HEK293T (cell line): ENCODE measurements at regions of chrX and their contacts with region 1.

Region 1: DNA sequence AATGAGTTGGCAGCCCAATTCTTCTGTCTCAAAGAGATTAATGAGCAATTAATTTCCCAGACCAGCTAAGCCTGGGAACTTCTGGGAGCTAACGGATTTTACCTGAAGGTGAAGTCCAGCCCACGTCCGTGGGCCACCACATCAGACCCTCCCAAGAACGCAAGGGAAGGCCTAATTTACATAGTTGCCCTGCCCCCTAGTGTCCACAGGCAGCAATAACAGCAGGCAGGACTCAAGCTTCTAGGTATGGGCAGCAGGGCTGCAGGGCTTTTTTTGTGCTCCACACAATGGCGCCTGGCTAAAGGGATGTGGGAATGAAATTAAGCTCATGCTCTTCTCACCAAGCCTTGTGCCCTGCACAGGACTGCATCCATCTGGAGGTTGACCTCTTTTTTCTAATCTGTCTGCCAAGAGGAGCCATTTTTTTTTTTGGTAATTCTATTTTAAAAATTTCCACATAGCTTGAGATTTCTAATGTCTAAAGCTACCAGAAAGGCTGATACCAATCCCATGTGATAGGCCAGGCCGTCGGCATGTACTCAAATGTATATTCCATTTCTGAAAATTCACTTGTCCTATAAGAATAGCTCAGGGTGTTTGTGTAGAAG is 111.9 kb upstream of the TMEM164 start:
- DNase-seq: peak; percentile 87

Region 2: GRCh38 chrX:109475174-109475891 is 415.7 kb before region 1 on chrX:
- CTCF ChIA-PET with region 1: interaction called, 10 read pairs
- POLR2A ChIA-PET with region 1: no interaction called
- DNase-seq: peak; percentile 79

Region 3: GRCh38 chrX:109501176-109501575 is 389.8 kb before region 1 on chrX:
- CTCF ChIA-PET with region 1: no interaction called
- POLR2A ChIA-PET with region 1: no interaction called
- DNase-seq: no peak

Region 4: GRCh38 chrX:109635176-109635575 is 255.8 kb before region 1 on chrX:
- CTCF ChIA-PET with region 1: interaction called, 11 read pairs
- POLR2A ChIA-PET with region 1: interaction called, 3 read pairs
- DNase-seq: peak; percentile 66

Region 5: GRCh38 chrX:109742722-109743121 is 148.3 kb before region 1 on chrX:
- CTCF ChIA-PET with region 1: no interaction called
- POLR2A ChIA-PET with region 1: no interaction called
- DNase-seq: no peak

Region 6: DNA sequence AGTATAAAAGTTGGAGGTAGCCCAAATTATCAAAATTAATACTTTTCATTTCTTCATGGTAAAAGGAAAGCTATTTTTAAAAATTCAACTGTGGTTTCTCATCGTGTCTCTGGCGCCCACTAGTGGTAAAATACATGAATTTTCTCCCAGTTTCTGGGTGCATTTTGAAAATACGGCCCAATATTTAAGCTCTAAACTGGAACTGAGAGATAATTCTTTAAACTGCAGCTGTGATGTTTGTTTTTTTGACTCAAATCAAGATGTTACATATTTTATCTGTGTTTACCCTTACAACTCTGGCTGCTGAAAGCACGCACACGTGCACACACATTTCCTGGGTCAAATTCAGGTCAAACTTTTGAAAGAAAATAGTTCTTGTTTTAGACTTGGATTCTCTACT is 34.0 kb before region 1 on chrX:
- CTCF ChIA-PET with region 1: interaction called, 16 read pairs
- POLR2A ChIA-PET with region 1: no interaction called
- DNase-seq: peak; percentile 40

Region 7: DNA sequence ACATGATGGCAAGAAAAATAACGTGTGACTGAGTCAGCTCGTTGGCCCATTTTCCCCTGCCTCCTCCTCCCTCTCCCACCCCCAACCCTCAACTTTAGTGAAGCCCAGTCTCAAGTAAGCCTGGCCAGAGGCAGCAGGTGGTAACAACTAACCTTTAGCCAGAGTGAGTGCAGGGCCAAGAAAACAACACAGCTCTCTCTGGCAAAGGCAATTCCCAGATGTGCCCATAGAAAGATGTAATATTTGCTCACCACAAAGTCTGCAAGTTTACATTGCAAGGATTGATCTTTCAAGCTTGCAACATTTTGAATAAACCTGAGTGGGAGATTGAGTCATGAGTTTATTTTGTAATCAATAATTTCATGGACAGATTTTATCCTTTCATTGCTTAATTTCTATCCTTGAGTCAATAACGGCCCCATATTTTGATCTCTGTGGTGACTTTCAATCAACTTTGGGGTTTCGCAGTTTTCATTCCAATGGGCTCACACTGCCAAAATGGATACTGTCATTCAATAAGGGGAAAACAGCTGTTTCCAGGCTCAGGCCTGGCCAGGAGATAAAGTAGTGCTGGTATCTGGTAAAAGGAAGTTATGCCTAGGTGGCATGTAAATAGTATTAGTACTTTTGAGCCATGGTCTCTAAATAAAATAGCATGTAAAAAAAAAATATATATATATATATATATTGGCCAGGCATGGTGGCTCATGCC is 18.8 kb before region 1 on chrX:
- CTCF ChIA-PET with region 1: interaction called, 17 read pairs
- POLR2A ChIA-PET with region 1: no interaction called
- DNase-seq: no peak

Region 8: DNA sequence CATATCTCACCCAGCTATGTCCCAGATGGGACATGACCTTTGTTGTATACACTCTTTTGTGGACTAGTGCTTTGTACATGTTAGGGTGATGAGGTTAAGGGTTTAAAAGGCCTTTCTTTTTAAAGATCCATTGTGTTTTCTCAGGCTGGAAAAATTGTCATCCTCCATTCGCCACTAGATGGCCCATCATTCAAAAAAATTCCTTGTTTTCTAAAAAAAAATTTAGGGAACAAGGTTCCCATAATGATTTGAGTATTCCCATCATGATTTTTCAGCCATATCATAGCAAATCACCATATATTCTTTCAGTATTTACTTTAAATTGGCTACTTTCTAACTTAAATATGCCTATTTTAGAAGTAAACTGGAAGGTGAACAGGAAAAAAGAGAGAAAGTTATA is 20.0 kb after region 1 on chrX:
- CTCF ChIA-PET with region 1: interaction called, 12 read pairs
- POLR2A ChIA-PET with region 1: no interaction called
- DNase-seq: no peak